Activated CD4-positive, alpha-beta T cell treated with anti-CD3 and anti-CD28 coated beads for 36 hours (primary cell): ENCODE measurements at regions of chr12 and their contacts with region 1.

Region 1: GRCh38 chr12:48814262-48815125 is 3.8 kb upstream of the CACNB3 start:
- DNase-seq: peak; percentile 90
- ATAC-seq: peak; percentile 77
- H3K4me3 Mint-ChIP-seq: peak overlapping the region; percentile 81
- H3K27ac Mint-ChIP-seq: no peak overlapping the region
- H3K4me1 Mint-ChIP-seq: peaks cover 23% of the 10 kb centered on the region
- H3K27me3 Mint-ChIP-seq: peaks cover 12% of the 10 kb centered on the region

Region 2: DNA sequence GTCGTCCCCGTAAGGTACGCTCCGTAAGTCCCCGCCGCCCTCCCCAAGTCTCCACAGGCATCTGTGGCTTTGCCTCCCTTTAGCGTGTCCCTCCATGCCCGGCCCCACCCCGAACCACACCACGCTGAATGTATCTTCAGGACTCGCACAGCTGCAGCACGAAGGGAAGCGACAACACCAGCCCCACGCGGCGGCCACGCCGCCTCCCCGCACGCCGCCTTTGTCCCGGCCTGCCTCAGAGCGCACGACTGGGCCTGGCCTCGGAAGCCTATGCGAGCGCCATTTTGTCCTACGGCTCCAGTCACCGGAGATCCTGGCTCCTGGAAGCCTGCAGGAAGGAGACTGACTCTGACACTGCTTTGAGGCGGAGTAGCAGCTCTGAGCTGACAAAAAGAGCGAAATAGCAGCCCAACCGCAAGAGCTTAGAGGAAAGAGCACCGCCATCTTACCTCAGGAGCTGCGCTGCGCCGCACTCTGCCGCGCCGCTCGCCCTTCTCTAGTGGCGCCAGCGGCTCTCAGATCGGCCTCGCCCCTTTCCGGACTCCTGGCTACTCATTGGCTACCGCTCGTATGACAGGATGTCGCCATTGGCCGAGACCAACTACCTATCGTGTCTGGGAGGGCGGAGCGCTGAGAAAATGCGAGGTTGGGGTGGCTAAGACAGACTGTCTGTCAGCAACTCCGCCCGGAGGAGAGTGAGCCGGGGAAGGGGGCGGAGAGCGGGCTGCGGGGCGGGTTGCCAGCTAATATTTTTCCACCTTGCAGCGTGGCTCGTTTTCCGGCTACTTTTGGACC is 132.6 kb before region 1 on chr12 and contains the start of gene KANSL2:
- CTCF ChIA-PET with region 1: no interaction called
- POLR2A ChIA-PET with region 1: interaction called, 3 read pairs
- intact Hi-C with region 1: loop called in 1 of 2 experiments (anchors 1 kb)
- DNase-seq: peak; percentile 99
- ATAC-seq: peak; percentile 96
- H3K4me3 Mint-ChIP-seq: peak within 1 kb of the TSS; percentile 87
- H3K27ac Mint-ChIP-seq: peak within 1 kb of the TSS; percentile 91
- H3K4me1 Mint-ChIP-seq: peaks cover 41% of the 10 kb centered on the region
- H3K27me3 Mint-ChIP-seq: no peaks in the 10 kb centered on the region
- total RNA-seq, gene KANSL2: 44.0 to 59.8 TPM

Region 3: DNA sequence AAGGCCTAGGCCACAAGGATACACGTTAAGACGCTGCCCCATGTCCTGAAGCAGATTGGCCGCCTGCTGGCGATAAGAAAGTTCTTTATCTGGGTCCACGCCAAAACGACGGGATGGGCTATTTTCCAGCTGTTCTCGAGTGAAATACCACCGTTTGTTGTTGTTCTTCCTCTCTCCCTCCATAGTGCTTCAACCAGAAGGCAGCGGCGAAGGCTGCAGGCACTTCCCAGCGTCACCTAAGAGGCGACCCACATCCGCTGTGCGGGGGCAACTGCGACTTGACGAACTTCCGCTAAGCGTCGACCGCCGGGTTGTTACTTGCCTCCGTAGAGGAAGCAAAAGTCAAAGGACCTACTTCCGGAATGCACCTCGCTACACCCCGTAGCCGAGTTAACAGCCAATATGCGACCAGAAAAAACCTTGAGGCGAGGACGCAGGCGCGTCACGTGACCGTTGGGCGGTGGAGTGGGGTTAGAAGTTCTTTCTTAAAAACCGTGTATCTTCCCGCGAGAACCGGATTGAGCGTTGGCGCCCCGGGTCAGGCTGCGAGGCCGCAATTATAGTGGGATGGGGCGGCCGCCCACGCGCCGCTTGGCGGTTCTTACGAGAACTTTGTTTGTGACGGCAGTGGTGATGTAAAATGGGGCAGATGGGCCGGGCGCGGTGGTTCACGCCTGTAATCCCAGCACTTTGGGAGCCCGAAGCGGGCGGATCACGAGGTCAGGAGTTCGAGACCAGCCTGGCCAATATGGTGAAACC is 97.8 kb before region 1 on chr12 and contains the start of gene CCNT1:
- CTCF ChIA-PET with region 1: interaction called, 4 read pairs
- POLR2A ChIA-PET with region 1: no interaction called
- intact Hi-C with region 1: loop called in 1 of 2 experiments (anchors 1 kb)
- DNase-seq: peak; percentile 100
- ATAC-seq: peak; percentile 95
- H3K4me3 Mint-ChIP-seq: peak within 1 kb of the TSS; percentile 99
- H3K27ac Mint-ChIP-seq: peak within 1 kb of the TSS; percentile 99
- H3K4me1 Mint-ChIP-seq: peaks cover 37% of the 10 kb centered on the region
- H3K27me3 Mint-ChIP-seq: no peaks in the 10 kb centered on the region
- total RNA-seq, gene CCNT1: 82.2 to 85.1 TPM

Region 4: GRCh38 chr12:48758221-48758620 is 56.3 kb before region 1 on chr12:
- CTCF ChIA-PET with region 1: interaction called, 13 read pairs
- POLR2A ChIA-PET with region 1: no interaction called
- intact Hi-C with region 1: loop called (anchors 1 to 5 kb)
- DNase-seq: no peak
- ATAC-seq: no peak
- H3K4me3 Mint-ChIP-seq: no peak overlapping the region
- H3K27ac Mint-ChIP-seq: no peak overlapping the region
- H3K4me1 Mint-ChIP-seq: peaks cover 2% of the 10 kb centered on the region
- H3K27me3 Mint-ChIP-seq: peaks cover 2% of the 10 kb centered on the region

Region 5: GRCh38 chr12:48795480-48796455 is 18.7 kb before region 1 on chr12:
- CTCF ChIA-PET with region 1: interaction called, 15 read pairs
- POLR2A ChIA-PET with region 1: no interaction called
- intact Hi-C with region 1: no loop called
- DNase-seq: peak; percentile 74
- ATAC-seq: peak; percentile 84
- H3K4me3 Mint-ChIP-seq: no peak overlapping the region
- H3K27ac Mint-ChIP-seq: no peak overlapping the region
- H3K4me1 Mint-ChIP-seq: peaks cover 2% of the 10 kb centered on the region
- H3K27me3 Mint-ChIP-seq: peaks cover 3% of the 10 kb centered on the region

Region 6: GRCh38 chr12:48826209-48826894 is 11.9 kb after region 1 on chr12:
- CTCF ChIA-PET with region 1: interaction called, 20 read pairs
- POLR2A ChIA-PET with region 1: no interaction called
- intact Hi-C with region 1: no loop called
- DNase-seq: no peak
- ATAC-seq: no peak
- H3K4me3 Mint-ChIP-seq: no peak overlapping the region
- H3K27ac Mint-ChIP-seq: no peak overlapping the region
- H3K4me1 Mint-ChIP-seq: no peaks in the 10 kb centered on the region
- H3K27me3 Mint-ChIP-seq: no peaks in the 10 kb centered on the region

Region 7: GRCh38 chr12:48890657-48891418 is 76.3 kb after region 1 on chr12:
- CTCF ChIA-PET with region 1: interaction called, 12 read pairs
- POLR2A ChIA-PET with region 1: no interaction called
- intact Hi-C with region 1: loop called in 1 of 2 experiments (anchors 1 kb)
- DNase-seq: peak; percentile 89
- ATAC-seq: peak; percentile 99
- H3K4me3 Mint-ChIP-seq: peak overlapping the region; percentile 4
- H3K27ac Mint-ChIP-seq: no peak overlapping the region
- H3K4me1 Mint-ChIP-seq: peaks cover 4% of the 10 kb centered on the region
- H3K27me3 Mint-ChIP-seq: peaks cover 14% of the 10 kb centered on the region